GM12878 (cell line): ENCODE measurements at regions of chr1 and their contacts with region 1.

Region 1: DNA sequence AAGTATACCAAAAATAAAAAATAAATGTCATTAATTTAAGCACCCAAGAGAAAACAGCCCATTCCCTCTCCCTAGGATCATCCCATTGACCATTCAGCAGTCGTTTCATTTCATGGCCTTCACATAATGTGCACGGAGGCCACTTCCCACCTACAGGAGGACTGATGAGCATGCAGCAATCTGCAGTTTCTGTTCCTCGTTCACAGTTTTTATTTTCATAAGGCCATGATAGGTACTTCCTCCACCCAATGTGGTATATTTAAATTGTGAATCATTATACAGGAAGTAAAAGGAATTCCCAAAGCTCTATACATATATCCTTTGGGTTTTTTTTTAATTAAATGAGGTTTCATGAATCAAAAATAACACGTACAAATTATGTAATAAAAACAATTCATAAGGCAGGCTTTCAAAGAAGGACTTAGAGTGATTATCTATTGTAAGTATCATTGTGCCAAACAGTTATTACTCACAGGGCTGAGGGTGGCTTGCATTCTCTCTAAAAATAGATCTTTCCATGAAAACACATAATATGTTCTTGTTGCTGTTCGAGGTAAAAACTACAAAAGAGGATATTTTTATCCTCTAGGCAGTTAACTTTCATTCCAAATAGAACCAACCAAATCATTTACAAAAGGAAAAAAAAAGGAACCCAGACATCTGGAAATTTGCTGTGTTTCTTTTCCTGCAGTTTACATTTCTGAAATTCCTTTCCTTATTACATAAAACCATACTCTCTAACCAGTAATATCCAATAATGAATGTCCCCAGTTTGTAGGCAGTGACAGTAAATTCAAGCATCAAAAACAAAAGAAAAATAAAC is 27.5 kb upstream of the SLC44A3 start:
- DNase-seq: peak; percentile 45
- ATAC-seq: peak; percentile 99
- H3K4me3 ChIP-seq: no peak overlapping the region
- H3K27ac ChIP-seq: no peak overlapping the region
- H3K4me1 ChIP-seq: peaks cover 4% of the 10 kb centered on the region; the same call in 1 of the 2 replicates
- H3K27me3 ChIP-seq: no peaks in the 10 kb centered on the region
- CTCF ChIP-seq: peak in 2 of 3 experiments; percentile 12 to 32; a peak in 1 of 6 replicates
- EP300 ChIP-seq: no peak
- POLR2A ChIP-seq: no peak
- RAD21 ChIP-seq: 0 out of 2 replicates have a peak, but pooled peaks have one; percentile 10

Region 2: DNA sequence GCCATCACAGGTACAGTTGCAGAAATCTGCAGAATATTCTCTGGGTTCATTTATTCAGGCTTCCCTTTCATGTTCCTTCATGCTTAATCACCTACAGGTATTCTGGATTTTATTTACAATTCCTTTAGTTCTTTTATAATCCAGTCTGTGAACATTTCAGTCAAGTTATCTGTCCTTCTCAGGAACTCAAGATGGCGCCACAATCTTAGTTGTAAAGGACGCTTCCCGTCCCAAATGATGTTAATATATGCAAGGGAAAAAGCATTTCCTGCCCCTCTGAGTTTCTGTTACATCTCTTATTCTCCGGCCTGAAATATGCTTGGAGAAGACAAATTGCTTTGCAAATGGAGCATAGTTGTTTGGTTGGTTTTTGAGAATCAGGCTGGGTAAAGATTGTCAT is 270.4 kb before region 1 on chr1:
- CTCF ChIA-PET with region 1: interaction called, 5 read pairs
- POLR2A ChIA-PET with region 1: no interaction called
- RAD21 ChIA-PET with region 1: no interaction called
- SMC1A ChIA-PET with region 1: no interaction called
- in situ Hi-C with region 1: loop called (anchors 5 kb)
- intact Hi-C with region 1: no loop called
- DNase-seq: no peak
- ATAC-seq: no peak
- H3K4me3 ChIP-seq: no peak overlapping the region
- H3K27ac ChIP-seq: no peak overlapping the region
- H3K4me1 ChIP-seq: no peaks in the 10 kb centered on the region
- H3K27me3 ChIP-seq: no peaks in the 10 kb centered on the region
- CTCF ChIP-seq: peak in 2 of 3 experiments; percentile 5 to 32; a peak in 2 of 6 replicates
- EP300 ChIP-seq: no peak
- POLR2A ChIP-seq: no peak
- RAD21 ChIP-seq: peak; percentile 54

Region 3: DNA sequence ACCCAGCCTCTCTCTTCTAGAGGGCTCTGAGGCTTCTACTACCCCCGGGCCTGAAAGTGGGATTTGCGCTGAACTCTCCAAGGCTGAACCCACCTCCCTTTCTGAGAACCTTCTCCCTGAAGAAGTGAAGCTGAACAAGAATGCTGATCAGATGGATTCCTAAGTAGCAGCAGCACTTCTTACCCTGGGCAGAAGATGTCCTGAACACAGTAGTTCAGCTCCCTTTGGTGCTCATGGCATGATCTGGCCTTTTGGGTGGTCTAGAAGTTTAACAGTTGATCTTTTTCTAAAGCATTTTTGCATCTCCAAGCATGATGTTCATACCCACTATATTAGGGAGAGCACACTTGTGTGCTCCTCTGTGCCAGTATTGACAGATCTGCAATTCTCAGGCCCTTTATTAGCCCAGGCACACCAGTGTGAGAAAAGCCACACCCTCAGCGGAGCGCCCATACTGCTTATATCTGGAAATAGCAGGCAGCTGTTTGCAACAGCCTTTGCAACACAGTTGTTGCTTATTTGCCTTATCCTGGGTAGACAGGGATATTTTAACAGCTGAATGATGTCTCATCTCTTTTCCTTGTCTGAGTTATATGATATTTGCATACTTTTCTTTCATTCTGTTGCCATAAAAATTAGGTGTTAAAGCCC is 100.0 kb after region 1 on chr1:
- CTCF ChIA-PET with region 1: no interaction called
- POLR2A ChIA-PET with region 1: no interaction called
- RAD21 ChIA-PET with region 1: no interaction called
- SMC1A ChIA-PET with region 1: no interaction called
- in situ Hi-C with region 1: no loop called
- intact Hi-C with region 1: no loop called
- DNase-seq: no peak
- ATAC-seq: no peak
- H3K4me3 ChIP-seq: no peak overlapping the region
- H3K27ac ChIP-seq: no peak overlapping the region
- H3K4me1 ChIP-seq: no peaks in the 10 kb centered on the region
- H3K27me3 ChIP-seq: no peaks in the 10 kb centered on the region
- CTCF ChIP-seq: no peak
- EP300 ChIP-seq: no peak
- POLR2A ChIP-seq: no peak
- RAD21 ChIP-seq: no peak

Region 4: DNA sequence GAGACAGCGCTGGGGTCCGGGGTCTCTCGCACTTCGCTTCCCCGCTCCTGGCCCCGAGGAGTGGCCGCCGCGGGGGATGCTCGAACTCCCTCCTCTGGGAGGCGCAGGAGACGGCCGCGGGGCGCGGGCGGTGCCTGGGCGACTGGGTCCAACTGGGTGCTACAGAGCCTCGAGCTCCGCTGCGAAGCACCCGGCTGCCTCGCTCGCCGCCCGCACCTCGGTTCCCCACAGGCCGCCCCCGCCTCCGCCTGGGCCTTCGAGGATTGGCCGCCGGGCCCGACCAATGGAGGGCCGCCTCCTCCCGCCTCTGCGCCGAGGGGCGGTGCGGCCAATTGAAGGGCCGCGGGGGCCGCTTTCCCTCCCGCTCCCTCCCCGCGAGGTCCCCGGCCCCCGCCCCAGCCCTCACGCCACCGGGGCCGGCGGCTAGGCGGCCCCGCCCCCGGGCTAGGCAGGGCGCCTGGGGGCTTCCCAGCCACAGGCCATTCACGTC is 134.3 kb after region 1 on chr1 and contains the start of gene CNN3:
- CTCF ChIA-PET with region 1: no interaction called
- POLR2A ChIA-PET with region 1: no interaction called
- RAD21 ChIA-PET with region 1: no interaction called
- SMC1A ChIA-PET with region 1: no interaction called
- in situ Hi-C with region 1: no loop called
- intact Hi-C with region 1: no loop called
- DNase-seq: peak; percentile 4
- ATAC-seq: peak; percentile 74
- H3K4me3 ChIP-seq: peak within 1 kb of the TSS; percentile 54
- H3K27ac ChIP-seq: peak within 1 kb of the TSS; percentile 37; the same call in 1 of the 2 replicates
- H3K4me1 ChIP-seq: no peaks in the 10 kb centered on the region
- H3K27me3 ChIP-seq: peaks cover 3 to 7% of the 10 kb centered on the region in 2 experiments; a peak in 3 of 4 replicates
- CTCF ChIP-seq: no peak
- EP300 ChIP-seq: no peak
- POLR2A ChIP-seq: peak; percentile 91
- RAD21 ChIP-seq: no peak
- polyA plus RNA-seq, gene CNN3: 17.0 to 19.9 TPM